ENCODE measurements at regions of chr15 and their contacts with region 1.

Region 1: GRCh38 chr15:77024271-77025082 is 29.6 kb downstream of the PSTPIP1 start:
- DNase-seq: peak; percentile 55 to 66 (median 59)
- H3K4me3 ChIP-seq: no peak overlapping the region
- H3K4me3 Mint-ChIP-seq: peak overlapping the region in 1 of 8 donors; percentile 70
- H3K27ac ChIP-seq: peak overlapping the region; percentile 41
- H3K27ac Mint-ChIP-seq: peak overlapping the region; percentile 77 to 100 (median 98)
- H3K4me1 ChIP-seq: peaks cover 48% of the 10 kb centered on the region
- H3K4me1 Mint-ChIP-seq: peaks cover 28 to 50% (median 43%) of the 10 kb centered on the region in 4 donors
- H3K27me3 ChIP-seq: no peaks in the 10 kb centered on the region
- H3K27me3 Mint-ChIP-seq: no peaks in the 10 kb centered on the region

Region 2: DNA sequence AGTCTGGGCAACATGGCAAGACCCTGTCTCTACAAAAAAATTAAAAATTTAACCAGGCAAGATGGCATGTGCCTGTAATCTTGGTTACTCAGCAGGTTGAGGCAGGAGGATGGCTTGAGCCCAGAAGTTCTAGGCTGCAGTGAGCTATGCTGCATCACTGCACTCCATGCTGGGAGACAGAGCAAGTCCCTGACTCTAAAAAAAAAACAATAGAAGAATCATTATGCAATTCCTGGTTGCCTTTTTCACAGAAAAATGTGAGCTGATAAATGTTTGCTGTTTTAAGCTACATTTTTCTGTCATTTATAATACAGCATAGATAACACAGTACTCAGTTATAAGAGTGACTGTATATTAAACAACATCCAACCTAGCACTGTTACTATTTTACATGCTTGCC is 268.1 kb before region 1 on chr15:
- CTCF ChIA-PET with region 1: no interaction called
- POLR2A ChIA-PET with region 1: no interaction called
- intact Hi-C with region 1: no loop called
- DNase-seq: no peak
- H3K4me3 ChIP-seq: no peak overlapping the region
- H3K4me3 Mint-ChIP-seq: no peak overlapping the region
- H3K27ac ChIP-seq: no peak overlapping the region
- H3K27ac Mint-ChIP-seq: no peak overlapping the region
- H3K4me1 ChIP-seq: no peaks in the 10 kb centered on the region
- H3K4me1 Mint-ChIP-seq: no peaks in the 10 kb centered on the region
- H3K27me3 ChIP-seq: no peaks in the 10 kb centered on the region
- H3K27me3 Mint-ChIP-seq: no peaks in the 10 kb centered on the region

Region 3: GRCh38 chr15:76931397-76932007 is 93.0 kb before region 1 on chr15 and contains the start of gene RCN2:
- CTCF ChIA-PET with region 1: interaction called, 4 read pairs
- POLR2A ChIA-PET with region 1: interaction called, 5 read pairs
- intact Hi-C with region 1: loop called (anchors 5 kb)
- DNase-seq: peak; percentile 89 to 92 (median 91)
- H3K4me3 ChIP-seq: peak within 1 kb of the TSS; percentile 48 to 67
- H3K4me3 Mint-ChIP-seq: peak within 1 kb of the TSS; percentile 89 to 94 (median 91)
- H3K27ac ChIP-seq: peak within 1 kb of the TSS; percentile 63
- H3K27ac Mint-ChIP-seq: peak within 1 kb of the TSS; percentile 70 to 95 (median 94)
- H3K4me1 ChIP-seq: peaks cover 26% of the 10 kb centered on the region
- H3K4me1 Mint-ChIP-seq: peaks cover 18 to 33% (median 28%) of the 10 kb centered on the region in 4 donors
- H3K27me3 ChIP-seq: no peaks in the 10 kb centered on the region
- H3K27me3 Mint-ChIP-seq: no peaks in the 10 kb centered on the region
- total RNA-seq, gene RCN2: 28.4 to 30.2 TPM

Region 4: GRCh38 chr15:77138167-77138522 is 113.7 kb after region 1 on chr15:
- CTCF ChIA-PET with region 1: no interaction called
- POLR2A ChIA-PET with region 1: no interaction called
- intact Hi-C with region 1: no loop called
- DNase-seq: no peak
- H3K4me3 ChIP-seq: no peak overlapping the region
- H3K4me3 Mint-ChIP-seq: no peak overlapping the region
- H3K27ac ChIP-seq: no peak overlapping the region
- H3K27ac Mint-ChIP-seq: no peak overlapping the region
- H3K4me1 ChIP-seq: no peaks in the 10 kb centered on the region
- H3K4me1 Mint-ChIP-seq: no peaks in the 10 kb centered on the region
- H3K27me3 ChIP-seq: no peaks in the 10 kb centered on the region
- H3K27me3 Mint-ChIP-seq: no peaks in the 10 kb centered on the region

Region 5: DNA sequence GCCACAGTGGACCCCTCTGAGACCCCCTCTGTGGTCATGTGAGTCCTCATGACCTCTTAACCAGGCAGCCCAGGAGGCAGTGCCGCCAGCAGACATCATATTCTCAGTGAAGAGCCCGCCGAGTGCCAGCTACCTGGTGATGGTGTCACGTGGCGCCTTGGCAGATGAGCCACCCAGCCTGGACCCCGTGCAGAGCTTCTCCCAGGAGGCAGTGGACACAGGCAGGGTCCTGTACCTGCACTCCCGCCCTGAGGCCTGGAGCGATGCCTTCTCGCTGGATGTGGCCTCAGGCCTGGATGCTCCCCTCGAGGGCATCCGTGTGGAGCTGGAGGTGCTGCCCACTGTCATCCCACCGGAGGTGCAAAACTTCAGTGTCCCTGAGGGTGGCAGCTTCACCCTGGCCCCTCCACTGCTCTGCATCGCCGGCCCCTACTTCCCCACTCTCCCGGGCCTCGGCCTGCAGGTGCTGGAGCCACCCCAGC is 876.8 kb after region 1 on chr15:
- CTCF ChIA-PET with region 1: no interaction called
- POLR2A ChIA-PET with region 1: no interaction called
- intact Hi-C with region 1: no loop called
- DNase-seq: no peak
- H3K4me3 ChIP-seq: no peak overlapping the region
- H3K4me3 Mint-ChIP-seq: no peak overlapping the region
- H3K27ac ChIP-seq: no peak overlapping the region
- H3K27ac Mint-ChIP-seq: no peak overlapping the region
- H3K4me1 ChIP-seq: no peaks in the 10 kb centered on the region
- H3K4me1 Mint-ChIP-seq: no peaks in the 10 kb centered on the region
- H3K27me3 ChIP-seq: no peaks in the 10 kb centered on the region
- H3K27me3 Mint-ChIP-seq: no peaks in the 10 kb centered on the region